Right cardiac atrium (tissue), 5 donors: ENCODE measurements at regions of chr17 and their contacts with region 1.

Region 1: GRCh38 chr17:64315032-64315490 is 52.0 kb upstream of the TEX2 start:
- DNase-seq: peak; percentile 95 to 98 (median 97)
- ATAC-seq: peak; percentile 91 to 94
- H3K4me3 ChIP-seq: no peak overlapping the region
- H3K27ac ChIP-seq: peak overlapping the region; percentile 83
- H3K4me1 ChIP-seq: peaks cover 3% of the 10 kb centered on the region
- H3K27me3 ChIP-seq: no peaks in the 10 kb centered on the region

Region 2: GRCh38 chr17:64084086-64084939 is 230.7 kb before region 1 on chr17:
- intact Hi-C with region 1: no loop called
- DNase-seq: peak in 2 of 3 donors; percentile 29 to 67
- ATAC-seq: peak; percentile 61 to 63
- H3K4me3 ChIP-seq: no peak overlapping the region
- H3K27ac ChIP-seq: no peak overlapping the region
- H3K4me1 ChIP-seq: peaks cover 7% of the 10 kb centered on the region
- H3K27me3 ChIP-seq: no peaks in the 10 kb centered on the region

Region 3: DNA sequence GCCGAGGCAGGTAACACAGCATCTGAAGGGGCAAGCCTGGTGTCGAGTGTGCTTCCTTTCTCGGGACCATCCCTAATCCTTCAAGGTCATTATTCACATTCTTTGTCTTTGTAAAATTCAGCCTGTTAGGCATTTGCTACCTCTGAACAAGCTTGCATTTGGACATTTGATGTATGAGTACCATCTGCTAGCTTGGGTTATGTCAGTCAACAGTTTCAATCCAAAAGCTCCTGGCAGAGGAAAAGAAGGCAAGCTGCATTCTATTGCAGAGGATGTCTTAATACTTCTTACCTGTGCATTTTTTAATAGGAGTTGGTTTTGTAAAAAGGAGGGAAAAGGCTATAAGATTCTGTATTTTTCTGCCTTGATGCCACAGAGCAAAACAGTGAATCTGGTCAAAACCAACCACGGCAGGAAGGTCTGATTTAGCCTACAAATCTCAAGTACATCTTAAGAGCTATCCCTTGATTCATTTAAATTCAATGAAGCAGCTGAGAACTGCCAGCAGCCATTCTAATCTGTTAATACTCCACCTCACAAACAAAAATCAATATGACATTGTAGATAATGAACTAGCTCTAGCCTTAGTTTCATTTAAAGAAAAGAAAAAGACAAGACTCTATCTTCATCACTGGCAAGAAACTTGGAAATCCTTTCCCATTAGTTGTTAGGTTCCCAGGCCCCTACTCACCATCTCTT is 91.0 kb before region 1 on chr17:
- intact Hi-C with region 1: no loop called
- DNase-seq: no peak
- ATAC-seq: no peak
- H3K4me3 ChIP-seq: no peak overlapping the region
- H3K27ac ChIP-seq: no peak overlapping the region
- H3K4me1 ChIP-seq: peaks cover 2% of the 10 kb centered on the region
- H3K27me3 ChIP-seq: no peaks in the 10 kb centered on the region

Region 4: GRCh38 chr17:64496786-64497564 is 181.9 kb after region 1 on chr17 and contains the start of gene POLG2:
- intact Hi-C with region 1: loop called in 1 of 4 experiments (anchors 10 kb)
- DNase-seq: peak; percentile 96 to 98 (median 97)
- ATAC-seq: peak; percentile 96
- H3K4me3 ChIP-seq: peak within 1 kb of the TSS; percentile 62
- H3K27ac ChIP-seq: peak within 1 kb of the TSS; percentile 53
- H3K4me1 ChIP-seq: peaks cover 2% of the 10 kb centered on the region
- H3K27me3 ChIP-seq: no peaks in the 10 kb centered on the region
- total RNA-seq, gene POLG2: 7.2 to 9.0 (median 8.2) TPM